Activated CD4-positive, alpha-beta T cell treated with anti-CD3 and anti-CD28 coated beads, Interleukin-2, amount 10 ng/mL, durations not matched to agents 24 days and 14 days (primary cell): ENCODE measurements at regions of chr10 and their contacts with region 1.

Region 1: DNA sequence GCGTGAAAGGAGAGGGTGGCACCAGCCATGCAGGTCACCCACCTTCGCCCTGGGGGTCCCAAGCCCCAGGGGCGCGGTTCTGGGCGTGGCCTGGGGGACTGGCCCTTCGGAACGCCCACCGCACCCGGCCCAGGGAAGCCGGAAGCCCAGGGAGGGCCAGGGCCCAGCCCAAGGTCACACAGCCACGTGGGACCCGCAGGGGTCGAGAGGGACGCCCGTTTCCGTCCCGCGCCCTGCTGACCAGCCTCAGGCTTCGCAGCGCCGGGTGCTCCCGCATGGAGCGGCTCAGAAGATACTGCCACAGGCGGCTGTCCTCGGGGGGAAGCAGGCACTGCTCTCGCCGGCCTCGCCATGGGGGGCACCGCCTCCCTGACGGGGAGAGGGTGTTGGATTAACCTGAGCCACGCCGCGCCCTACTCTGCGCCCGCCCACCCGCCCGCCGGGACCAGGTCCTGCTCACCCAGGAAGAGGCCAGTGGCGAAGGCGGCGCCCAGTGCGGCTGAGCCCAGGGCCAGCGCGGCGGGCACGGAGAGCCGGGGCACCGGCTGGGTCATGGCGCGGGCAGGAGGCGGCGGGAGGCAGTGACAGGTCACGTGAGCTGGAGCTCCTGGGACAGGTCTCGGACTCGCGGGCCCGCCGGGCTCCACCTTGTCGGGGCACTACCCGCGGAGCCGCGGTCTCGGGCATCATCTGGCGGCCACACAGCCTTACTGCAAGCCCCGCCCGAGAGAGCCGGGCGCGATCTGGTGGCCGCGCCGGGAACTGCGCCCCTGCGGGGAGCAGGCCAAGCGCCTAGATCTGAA is at the start of gene COMTD1:
- DNase-seq: peak; percentile 98
- H3K4me3 Mint-ChIP-seq: peak within 1 kb of the TSS; percentile 87
- H3K27ac Mint-ChIP-seq: peak within 1 kb of the TSS; percentile 91
- H3K4me1 Mint-ChIP-seq: peaks cover 14% of the 10 kb centered on the region
- H3K27me3 Mint-ChIP-seq: no peaks in the 10 kb centered on the region
- total RNA-seq, gene COMTD1: 37.1 and 38.1 TPM in 2 replicates

Region 2: DNA sequence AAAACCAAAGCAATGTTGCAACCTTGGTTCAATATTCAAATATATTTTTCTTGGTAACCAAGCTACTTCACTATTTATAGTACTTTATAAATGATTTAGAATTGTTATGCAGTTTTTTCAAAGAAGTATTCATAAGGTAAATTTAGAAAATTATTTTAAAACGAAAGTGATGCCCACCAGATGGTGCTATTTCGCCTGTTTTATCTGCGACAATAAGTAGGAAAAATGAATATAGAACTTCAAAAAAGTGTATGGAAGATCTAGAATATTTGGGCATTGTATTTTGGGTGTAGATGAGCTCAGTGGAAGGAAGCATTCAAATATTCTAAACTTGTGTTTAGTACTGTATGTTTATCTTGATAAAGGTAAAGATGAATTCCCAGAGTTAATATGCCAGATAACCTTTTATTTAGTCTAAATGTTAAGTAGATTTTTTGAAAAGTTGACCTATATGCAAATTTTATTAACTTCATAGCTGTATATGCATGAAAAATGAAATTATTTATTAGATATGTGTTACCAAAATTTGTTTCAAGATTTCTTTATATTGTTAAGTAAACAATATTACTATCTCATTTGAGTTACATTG is 991.4 kb before region 1 on chr10:
- intact Hi-C with region 1: loop called (anchors 5 kb)
- DNase-seq: peak; percentile 73
- H3K4me3 Mint-ChIP-seq: no peak overlapping the region
- H3K27ac Mint-ChIP-seq: no peak overlapping the region
- H3K4me1 Mint-ChIP-seq: peaks cover 2% of the 10 kb centered on the region
- H3K27me3 Mint-ChIP-seq: no peaks in the 10 kb centered on the region

Region 3: DNA sequence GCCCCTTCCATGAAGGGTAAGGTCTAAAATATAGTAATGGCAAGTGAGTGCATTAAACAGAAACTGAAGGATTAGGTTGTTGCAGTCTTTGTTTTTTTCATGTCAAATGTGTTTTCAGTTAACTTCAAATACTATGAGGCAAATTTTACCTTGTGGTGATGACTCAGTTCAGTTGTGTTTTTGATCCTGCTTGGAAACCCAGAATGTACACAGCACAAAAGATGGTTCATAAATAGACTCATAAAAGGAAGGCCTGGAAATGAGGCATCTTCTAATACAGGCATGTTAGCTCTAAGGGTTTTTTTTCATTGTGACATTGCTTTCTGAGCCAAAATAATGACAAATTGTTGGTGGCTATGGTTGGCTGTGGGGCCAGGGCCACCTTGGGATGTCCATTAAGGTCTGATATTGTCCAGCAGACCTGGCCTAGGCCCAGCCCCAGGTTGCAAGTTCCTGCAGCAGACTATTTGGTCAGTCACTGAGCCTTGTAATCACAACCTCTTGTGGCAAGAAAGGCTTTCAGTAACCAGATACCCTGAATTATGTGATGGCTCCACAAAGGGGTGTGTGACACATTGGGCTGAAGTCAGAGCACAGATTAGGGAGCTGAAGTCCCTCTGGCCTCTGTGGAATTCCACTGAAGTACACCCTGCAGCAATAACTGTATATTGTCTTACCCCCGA is 193.1 kb before region 1 on chr10:
- intact Hi-C with region 1: loop called (anchors 2 kb)
- DNase-seq: peak; percentile 66
- H3K4me3 Mint-ChIP-seq: peak overlapping the region; percentile 32
- H3K27ac Mint-ChIP-seq: peak overlapping the region; percentile 86
- H3K4me1 Mint-ChIP-seq: peaks cover 33% of the 10 kb centered on the region
- H3K27me3 Mint-ChIP-seq: no peaks in the 10 kb centered on the region

Region 4: GRCh38 chr10:75187961-75188426 is 47.6 kb before region 1 on chr10:
- intact Hi-C with region 1: loop called (anchors 1 kb)
- DNase-seq: peak; percentile 89
- H3K4me3 Mint-ChIP-seq: no peak overlapping the region
- H3K27ac Mint-ChIP-seq: peak overlapping the region; percentile 15
- H3K4me1 Mint-ChIP-seq: peaks cover 12% of the 10 kb centered on the region
- H3K27me3 Mint-ChIP-seq: no peaks in the 10 kb centered on the region

Region 5: DNA sequence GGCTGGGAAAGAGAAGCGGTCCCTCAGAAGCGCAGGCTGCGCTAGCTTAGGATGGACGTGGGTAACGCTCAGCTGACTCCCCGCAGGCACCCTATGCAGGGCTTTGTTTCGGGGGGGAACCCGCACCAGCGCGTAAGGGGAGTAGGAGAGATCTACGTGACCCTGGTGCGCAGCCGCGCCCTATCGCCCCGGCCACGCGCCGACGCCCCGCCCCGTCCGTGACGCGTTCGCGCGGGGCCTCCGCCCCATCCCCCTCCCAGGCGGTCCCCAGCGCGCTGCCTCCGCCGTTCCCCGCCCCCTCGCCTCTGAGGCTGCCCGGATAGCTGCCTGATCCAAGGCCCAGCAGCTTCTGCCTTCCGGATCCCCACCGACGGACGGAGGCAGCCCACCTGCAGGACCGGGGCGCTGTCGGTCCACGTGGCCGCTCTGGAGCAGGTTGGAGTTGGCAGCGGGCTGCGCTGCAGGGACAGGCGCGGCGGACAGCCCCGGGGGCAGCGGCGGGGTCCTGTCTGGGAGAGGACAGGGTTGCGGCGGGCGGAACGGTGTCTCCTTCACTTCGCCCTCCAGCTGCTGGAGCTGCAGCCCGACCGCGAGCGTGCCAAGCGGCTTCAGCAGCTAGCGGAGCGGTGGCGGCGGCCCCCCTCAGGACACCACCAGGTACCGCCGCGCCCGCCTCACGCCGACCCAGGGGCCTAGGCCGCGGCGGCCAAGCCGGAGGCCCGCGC is 25.1 kb before region 1 on chr10 and contains the start of gene VDAC2:
- intact Hi-C with region 1: loop called (anchors 1 kb)
- DNase-seq: peak; percentile 99
- H3K4me3 Mint-ChIP-seq: peak within 1 kb of the TSS; percentile 96
- H3K27ac Mint-ChIP-seq: peak within 1 kb of the TSS; percentile 100
- H3K4me1 Mint-ChIP-seq: peaks cover 34% of the 10 kb centered on the region
- H3K27me3 Mint-ChIP-seq: no peaks in the 10 kb centered on the region
- total RNA-seq, gene VDAC2: 245 and 249 TPM in 2 replicates

Region 6: GRCh38 chr10:75250910-75251309 is 15.3 kb after region 1 on chr10:
- intact Hi-C with region 1: no loop called
- DNase-seq: no peak
- H3K4me3 Mint-ChIP-seq: no peak overlapping the region
- H3K27ac Mint-ChIP-seq: no peak overlapping the region
- H3K4me1 Mint-ChIP-seq: no peaks in the 10 kb centered on the region
- H3K27me3 Mint-ChIP-seq: no peaks in the 10 kb centered on the region

Region 7: DNA sequence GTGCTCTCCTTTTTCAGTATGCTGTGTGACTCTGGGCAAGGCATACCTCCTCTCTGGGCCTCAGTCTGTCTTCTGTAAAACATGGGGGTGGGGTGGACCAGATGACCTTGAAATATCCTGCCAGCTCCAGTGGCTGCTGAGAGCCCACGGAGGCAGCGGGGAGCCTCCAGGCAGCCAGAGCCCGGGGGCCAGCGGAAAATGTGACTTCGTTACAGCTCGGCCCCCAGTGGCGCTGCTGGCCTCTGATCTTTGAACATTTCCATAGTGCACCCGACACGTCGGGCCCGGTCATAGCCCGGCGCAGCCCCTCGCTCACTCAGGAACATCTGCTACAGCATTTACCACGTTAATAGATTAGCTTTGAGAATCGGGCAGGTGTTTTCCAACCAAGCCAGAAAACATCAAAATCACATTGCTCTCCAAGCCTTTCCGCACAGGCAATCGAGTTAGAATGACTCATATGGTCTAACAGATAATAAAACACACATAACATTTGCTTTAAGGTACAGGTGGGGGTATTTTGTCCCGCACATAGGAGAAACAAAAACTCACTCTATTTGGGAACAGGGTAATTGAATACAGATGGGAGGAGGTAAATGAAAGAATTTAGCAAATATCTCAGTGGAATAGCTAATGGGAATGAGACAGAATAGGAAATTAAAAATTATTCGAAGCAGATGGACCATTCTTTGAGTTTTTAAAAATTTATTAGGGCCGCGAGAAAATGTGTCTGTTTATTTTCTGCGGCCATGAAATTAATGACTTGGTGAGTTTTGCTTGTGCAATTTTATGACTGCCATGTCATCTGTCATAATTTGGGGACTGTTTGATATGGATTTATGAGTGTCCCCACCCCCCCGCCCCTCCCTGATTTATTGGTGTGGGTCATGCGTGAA is 26.5 kb after region 1 on chr10:
- intact Hi-C with region 1: no loop called
- DNase-seq: no peak
- H3K4me3 Mint-ChIP-seq: no peak overlapping the region
- H3K27ac Mint-ChIP-seq: no peak overlapping the region
- H3K4me1 Mint-ChIP-seq: no peaks in the 10 kb centered on the region
- H3K27me3 Mint-ChIP-seq: peaks cover 2% of the 10 kb centered on the region

Region 8: GRCh38 chr10:75932921-75933320 is 697.3 kb after region 1 on chr10:
- intact Hi-C with region 1: no loop called
- DNase-seq: no peak
- H3K4me3 Mint-ChIP-seq: no peak overlapping the region
- H3K27ac Mint-ChIP-seq: no peak overlapping the region
- H3K4me1 Mint-ChIP-seq: no peaks in the 10 kb centered on the region
- H3K27me3 Mint-ChIP-seq: no peaks in the 10 kb centered on the region

Region 9: GRCh38 chr10:77082601-77083252 is 1847.2 kb after region 1 on chr10:
- intact Hi-C with region 1: no loop called
- DNase-seq: no peak
- H3K4me3 Mint-ChIP-seq: no peak overlapping the region
- H3K27ac Mint-ChIP-seq: no peak overlapping the region
- H3K4me1 Mint-ChIP-seq: no peaks in the 10 kb centered on the region
- H3K27me3 Mint-ChIP-seq: no peaks in the 10 kb centered on the region